ENCODE measurements at regions of chr12 and their contacts with region 1.

Region 1: DNA sequence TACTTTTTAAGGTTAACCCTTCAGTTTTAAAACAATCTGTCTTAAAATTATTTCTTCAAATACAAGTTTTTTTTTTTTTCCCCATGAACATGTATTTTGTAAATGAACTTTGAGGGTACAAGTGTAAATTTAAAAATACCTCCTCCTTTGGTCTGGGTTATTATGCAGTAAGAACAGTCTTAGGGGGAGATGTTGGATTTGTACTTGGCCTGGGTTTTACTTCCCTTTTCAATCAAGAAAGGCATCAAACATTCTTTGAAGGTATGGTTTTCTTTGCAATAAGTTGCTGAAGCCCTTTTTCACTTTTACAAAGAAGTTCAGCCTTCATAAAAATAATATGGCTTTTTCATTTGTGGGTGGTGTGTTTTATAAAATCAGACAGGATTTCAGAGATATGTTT is 20.5 kb downstream of the WBP11 start:
- DNase-seq: no peak
- H3K4me3 ChIP-seq: no peak overlapping the region
- H3K27ac ChIP-seq: no peak overlapping the region
- H3K4me1 ChIP-seq: no peaks in the 10 kb centered on the region
- H3K27me3 ChIP-seq: no peaks in the 10 kb centered on the region
- CTCF ChIP-seq: no peak
- EP300 ChIP-seq: no peak
- POLR2A ChIP-seq: no peak
- RAD21 ChIP-seq: no peak

Region 2: GRCh38 chr12:14803011-14803829 is 20.5 kb after region 1 on chr12 and contains the starts of genes C12orf60 and WBP11:
- CTCF ChIA-PET with region 1: interaction called, 4 read pairs
- POLR2A ChIA-PET with region 1: interaction called, 14 read pairs
- DNase-seq: peak; percentile 82 to 89
- H3K4me3 ChIP-seq: peak within 1 kb of the TSS; percentile 66 to 98 (median 96)
- H3K27ac ChIP-seq: peak within 1 kb of the TSS; percentile 93
- H3K4me1 ChIP-seq: peaks cover 0 to 2% (median 0%) of the 10 kb centered on the region in 4 experiments; a peak in 3 of 7 replicates
- H3K27me3 ChIP-seq: no peaks in the 10 kb centered on the region
- CTCF ChIP-seq: no peak
- EP300 ChIP-seq: no peak
- POLR2A ChIP-seq: peak; percentile 90 to 95
- RAD21 ChIP-seq: no peak
- total RNA-seq, gene C12orf60: 1.2 and 1.5 TPM in 2 replicates
- total RNA-seq, gene WBP11: 122 and 134 TPM in 2 replicates